ENCODE measurements at regions of chr17 and their contacts with region 1.

Region 1: GRCh38 chr17:40113110-40113906 is 8.5 kb upstream of the MSL1 start:
- DNase-seq: peak; percentile 97 to 100
- ATAC-seq: peak; percentile 77 to 87
- H3K4me3 ChIP-seq: peak overlapping the region; percentile 42
- H3K27ac ChIP-seq: peak overlapping the region; percentile 86 to 93
- H3K4me1 ChIP-seq: peaks cover 53% of the 10 kb centered on the region
- CTCF ChIP-seq: peak; percentile 35; the same call in 2 of the 3 replicates
- EP300 ChIP-seq: no peak
- POLR2A ChIP-seq: peak; percentile 62
- RAD21 ChIP-seq: peak; percentile 88 to 95; a peak in 4 of 5 replicates

Region 2: GRCh38 chr17:40021451-40021971 is 91.8 kb before region 1 on chr17:
- CTCF ChIA-PET with region 1: interaction called, 142 read pairs
- POLR2A ChIA-PET with region 1: interaction called, 9 read pairs
- DNase-seq: peak; percentile 56 to 80
- ATAC-seq: peak; percentile 57 to 72
- H3K4me3 ChIP-seq: no peak overlapping the region
- H3K27ac ChIP-seq: peak overlapping the region; percentile 83 to 84
- H3K4me1 ChIP-seq: peaks cover 43% of the 10 kb centered on the region
- CTCF ChIP-seq: no peak
- EP300 ChIP-seq: no peak
- POLR2A ChIP-seq: no peak
- RAD21 ChIP-seq: no peak

Region 3: GRCh38 chr17:40062329-40063186 is 50.8 kb before region 1 on chr17 and contains the start of gene THRA:
- CTCF ChIA-PET with region 1: interaction called, 228 read pairs
- POLR2A ChIA-PET with region 1: interaction called, 10 read pairs
- DNase-seq: peak in 1 of 2 experiments; percentile 68
- ATAC-seq: peak; percentile 65 to 70
- H3K4me3 ChIP-seq: peak within 1 kb of the TSS; percentile 98
- H3K27ac ChIP-seq: peak within 1 kb of the TSS; percentile 92 to 98
- H3K4me1 ChIP-seq: peaks cover 33% of the 10 kb centered on the region
- CTCF ChIP-seq: peak; percentile 86
- EP300 ChIP-seq: no peak
- POLR2A ChIP-seq: no peak
- RAD21 ChIP-seq: no peak; a peak in 3 of 5 replicates
- polyA plus RNA-seq, gene THRA: 20.1 and 27.4 TPM in 2 replicates

Region 4: DNA sequence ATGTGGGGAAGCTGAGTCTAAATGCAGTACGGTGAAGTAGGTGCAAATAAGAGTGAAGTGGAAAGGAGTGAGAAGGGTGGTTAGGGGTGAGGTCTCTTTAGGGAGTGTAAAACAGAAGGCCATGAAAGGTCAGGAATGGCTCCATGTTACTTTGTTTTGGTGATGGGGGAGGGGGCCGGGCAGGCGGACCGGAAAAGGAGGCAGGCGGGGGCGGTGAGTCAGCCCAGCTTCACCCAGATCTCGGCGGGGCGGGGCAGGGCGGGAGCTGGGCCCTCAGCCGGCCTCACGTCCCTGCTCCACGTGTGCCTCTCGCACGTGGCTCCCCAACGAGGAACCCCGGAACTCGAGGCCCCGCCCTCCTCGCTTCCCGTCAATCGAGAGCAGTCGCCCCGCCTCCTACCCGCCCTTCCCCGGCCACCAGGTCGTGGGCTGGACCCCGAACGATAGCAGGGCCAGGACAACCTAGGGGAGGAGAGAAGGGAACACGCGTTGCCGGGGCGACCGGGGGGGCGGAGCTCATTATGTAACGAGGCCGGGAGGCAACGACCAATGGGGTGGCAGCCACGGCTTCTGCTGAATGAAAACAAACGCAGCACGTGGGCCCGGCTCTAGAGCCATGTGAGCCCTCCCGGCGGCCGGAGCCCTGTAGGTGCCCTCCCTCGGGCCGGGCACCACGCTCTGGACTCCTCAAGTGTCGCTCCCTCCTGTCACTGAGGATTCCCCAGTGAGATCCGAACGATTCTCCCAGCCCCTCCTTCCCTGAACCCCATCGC is 14.3 kb before region 1 on chr17:
- CTCF ChIA-PET with region 1: interaction called, 168 read pairs
- POLR2A ChIA-PET with region 1: interaction called, 173 read pairs
- DNase-seq: peak; percentile 99
- ATAC-seq: peak; percentile 58 to 66
- H3K4me3 ChIP-seq: peak overlapping the region; percentile 54
- H3K27ac ChIP-seq: peak overlapping the region; percentile 89
- H3K4me1 ChIP-seq: peaks cover 53% of the 10 kb centered on the region
- CTCF ChIP-seq: no peak
- EP300 ChIP-seq: peak in 1 of 2 experiments; percentile 53; a peak in 1 of 5 replicates
- POLR2A ChIP-seq: no peak
- RAD21 ChIP-seq: no peak; a peak in 1 of 5 replicates

Region 5: GRCh38 chr17:40151414-40151963 is 38.2 kb after region 1 on chr17:
- CTCF ChIA-PET with region 1: interaction called, 34 read pairs
- POLR2A ChIA-PET with region 1: no interaction called
- DNase-seq: no peak
- ATAC-seq: 0 out of 6 replicates have a peak, but pooled peaks of 1 of the 2 experiments have one; percentile 24
- H3K4me3 ChIP-seq: no peak overlapping the region
- H3K27ac ChIP-seq: no peak overlapping the region
- H3K4me1 ChIP-seq: peaks cover 5% of the 10 kb centered on the region; the same call in 1 of the 3 replicates
- CTCF ChIP-seq: no peak
- EP300 ChIP-seq: no peak
- POLR2A ChIP-seq: no peak
- RAD21 ChIP-seq: no peak

Region 6: DNA sequence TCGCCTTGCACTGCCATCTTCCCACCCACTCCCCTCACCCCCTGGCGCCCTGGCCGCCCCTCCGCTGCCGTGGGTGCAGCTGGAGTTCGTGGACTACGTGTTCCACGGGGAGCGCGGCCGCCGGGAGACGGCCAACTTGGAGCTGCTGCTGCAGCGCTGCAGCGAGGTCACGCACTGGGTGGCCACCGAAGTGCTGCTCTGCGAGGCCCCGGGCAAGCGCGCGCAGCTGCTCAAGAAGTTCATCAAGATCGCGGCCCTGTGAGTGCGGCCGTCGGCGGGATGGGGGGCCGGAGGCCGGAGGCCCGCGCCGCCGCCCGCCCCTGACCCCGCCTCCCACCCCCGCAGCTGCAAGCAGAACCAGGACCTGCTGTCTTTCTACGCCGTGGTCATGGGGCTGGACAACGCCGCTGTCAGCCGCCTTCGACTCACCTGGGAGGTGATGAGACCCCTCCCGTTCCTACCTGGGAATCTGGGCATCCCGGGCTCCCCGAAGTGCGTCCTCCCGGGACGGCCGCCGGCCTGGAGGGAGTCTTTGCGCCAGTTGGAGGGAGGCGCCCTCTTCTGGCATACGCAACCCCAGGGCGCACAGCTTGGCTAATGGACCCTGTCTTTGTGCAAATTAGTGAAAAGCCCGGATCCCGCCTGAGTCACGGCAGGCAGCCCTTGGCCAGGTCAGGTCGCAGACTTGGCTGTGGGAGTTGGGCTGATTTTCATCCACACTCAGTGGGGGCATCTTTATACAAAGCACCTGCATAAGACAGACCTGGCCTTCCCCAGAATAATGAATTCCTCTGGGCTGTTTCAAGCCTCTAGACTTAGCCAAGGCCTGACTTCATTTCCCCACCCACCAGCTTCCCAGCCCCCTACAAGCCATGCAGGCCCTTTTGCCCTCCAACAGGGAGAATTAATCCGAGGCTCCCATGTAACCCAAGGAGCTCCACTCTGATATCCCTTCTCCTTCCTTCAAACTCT is 78.2 kb after region 1 on chr17:
- CTCF ChIA-PET with region 1: interaction called, 116 read pairs
- POLR2A ChIA-PET with region 1: interaction called, 12 read pairs
- DNase-seq: peak; percentile 86 to 96
- ATAC-seq: peak; percentile 83 to 91
- H3K4me3 ChIP-seq: peak overlapping the region; percentile 47
- H3K27ac ChIP-seq: peak overlapping the region; percentile 50 to 70
- H3K4me1 ChIP-seq: peaks cover 17% of the 10 kb centered on the region
- CTCF ChIP-seq: peak; percentile 95
- EP300 ChIP-seq: no peak
- POLR2A ChIP-seq: no peak; the same call in 1 of the 2 replicates
- RAD21 ChIP-seq: peak; percentile 74 to 77

Region 7: GRCh38 chr17:40287494-40288369 is 174.4 kb after region 1 on chr17 and contains the start of gene CDC6:
- CTCF ChIA-PET with region 1: interaction called, 39 read pairs
- POLR2A ChIA-PET with region 1: interaction called, 5 read pairs
- DNase-seq: peak; percentile 99 to 100
- ATAC-seq: peak; percentile 94 to 97
- H3K4me3 ChIP-seq: peak within 1 kb of the TSS; percentile 72
- H3K27ac ChIP-seq: peak within 1 kb of the TSS; percentile 70 to 83
- H3K4me1 ChIP-seq: peaks cover 34% of the 10 kb centered on the region
- CTCF ChIP-seq: no peak
- EP300 ChIP-seq: no peak; a peak in 1 of 5 replicates
- POLR2A ChIP-seq: peak; percentile 77
- RAD21 ChIP-seq: no peak
- polyA plus RNA-seq, gene CDC6: 71.4 and 79.5 TPM in 2 replicates

Region 8: GRCh38 chr17:40433551-40434415 is 320.5 kb after region 1 on chr17:
- CTCF ChIA-PET with region 1: no interaction called
- POLR2A ChIA-PET with region 1: no interaction called
- DNase-seq: peak in 1 of 2 experiments; percentile 66
- ATAC-seq: peak; percentile 86 to 93
- H3K4me3 ChIP-seq: no peak overlapping the region
- H3K27ac ChIP-seq: peak overlapping the region in 1 of 2 experiments; percentile 25; a peak in 3 of 6 replicates
- H3K4me1 ChIP-seq: 0 out of 3 replicates have a peak, but pooled peaks cover 3% of the 10 kb centered on the region
- CTCF ChIP-seq: peak; percentile 33; the same call in 2 of the 3 replicates
- EP300 ChIP-seq: no peak
- POLR2A ChIP-seq: no peak
- RAD21 ChIP-seq: peak in 1 of 2 experiments; percentile 50; a peak in 3 of 5 replicates

Measured in A549 (cell line).